Activated CD4-positive, alpha-beta T cell treated with anti-CD3 and anti-CD28 coated beads, Interleukin-2, amount 10 ng/mL, durations not matched to agents 7 days and 5 days (primary cell): ENCODE measurements at regions of chr1 and their contacts with region 1.

Region 1: DNA sequence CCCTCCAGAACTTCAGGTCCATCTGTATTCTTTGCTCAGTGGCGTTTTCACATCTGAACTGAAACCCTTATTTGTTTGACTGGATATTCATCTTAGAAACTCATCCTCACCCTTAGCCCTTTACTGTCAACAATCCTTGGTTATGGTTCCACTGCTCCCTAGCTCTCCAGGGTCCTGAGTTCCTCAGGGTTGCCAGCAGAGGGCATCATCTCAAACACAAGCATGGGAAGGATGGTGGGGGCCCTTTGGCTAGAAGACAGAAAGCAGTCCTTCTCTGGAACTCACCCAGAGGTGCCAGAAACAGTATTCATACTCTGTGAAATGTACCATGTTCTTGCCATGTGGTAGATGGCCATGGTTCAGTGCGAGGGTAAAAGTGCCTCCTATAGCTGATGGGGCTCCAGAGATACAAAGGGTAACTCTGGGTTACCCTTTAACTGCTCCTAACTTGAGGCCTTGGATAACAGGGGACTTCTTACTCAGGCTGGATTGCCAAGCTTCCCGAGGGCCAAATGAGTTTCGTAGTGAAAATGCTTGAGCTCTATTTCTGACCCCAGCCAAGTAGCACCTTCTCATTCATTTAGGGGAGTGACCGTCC is 11.3 kb downstream of the NCSTN start:
- DNase-seq: peak; percentile 27
- H3K4me3 Mint-ChIP-seq: no peak overlapping the region
- H3K27ac Mint-ChIP-seq: no peak overlapping the region
- H3K4me1 Mint-ChIP-seq: peaks cover 4% of the 10 kb centered on the region
- H3K27me3 Mint-ChIP-seq: no peaks in the 10 kb centered on the region

Region 2: DNA sequence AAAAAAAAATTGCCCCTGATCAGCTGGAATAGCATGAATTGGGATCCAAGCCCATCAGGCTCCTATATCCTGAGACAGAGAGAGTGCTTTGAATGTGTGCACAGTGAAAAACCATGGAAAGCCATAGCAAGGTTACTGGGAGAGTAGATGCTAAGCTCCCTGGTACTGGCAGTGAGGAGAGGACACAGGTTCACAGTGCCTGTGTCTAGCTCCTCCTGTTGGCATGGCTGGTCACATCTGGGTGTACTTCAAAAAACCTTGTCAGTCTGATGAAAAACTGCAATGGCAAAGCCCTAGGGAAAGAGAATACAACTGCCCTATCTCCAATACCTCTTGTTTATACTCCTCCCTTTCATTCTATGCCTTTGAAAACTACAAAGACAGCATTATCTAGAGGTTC is 24.4 kb before region 1 on chr1:
- CTCF ChIA-PET with region 1: no interaction called
- POLR2A ChIA-PET with region 1: no interaction called
- DNase-seq: no peak
- H3K4me3 Mint-ChIP-seq: no peak overlapping the region
- H3K27ac Mint-ChIP-seq: no peak overlapping the region
- H3K4me1 Mint-ChIP-seq: no peaks in the 10 kb centered on the region
- H3K27me3 Mint-ChIP-seq: no peaks in the 10 kb centered on the region

Region 3: DNA sequence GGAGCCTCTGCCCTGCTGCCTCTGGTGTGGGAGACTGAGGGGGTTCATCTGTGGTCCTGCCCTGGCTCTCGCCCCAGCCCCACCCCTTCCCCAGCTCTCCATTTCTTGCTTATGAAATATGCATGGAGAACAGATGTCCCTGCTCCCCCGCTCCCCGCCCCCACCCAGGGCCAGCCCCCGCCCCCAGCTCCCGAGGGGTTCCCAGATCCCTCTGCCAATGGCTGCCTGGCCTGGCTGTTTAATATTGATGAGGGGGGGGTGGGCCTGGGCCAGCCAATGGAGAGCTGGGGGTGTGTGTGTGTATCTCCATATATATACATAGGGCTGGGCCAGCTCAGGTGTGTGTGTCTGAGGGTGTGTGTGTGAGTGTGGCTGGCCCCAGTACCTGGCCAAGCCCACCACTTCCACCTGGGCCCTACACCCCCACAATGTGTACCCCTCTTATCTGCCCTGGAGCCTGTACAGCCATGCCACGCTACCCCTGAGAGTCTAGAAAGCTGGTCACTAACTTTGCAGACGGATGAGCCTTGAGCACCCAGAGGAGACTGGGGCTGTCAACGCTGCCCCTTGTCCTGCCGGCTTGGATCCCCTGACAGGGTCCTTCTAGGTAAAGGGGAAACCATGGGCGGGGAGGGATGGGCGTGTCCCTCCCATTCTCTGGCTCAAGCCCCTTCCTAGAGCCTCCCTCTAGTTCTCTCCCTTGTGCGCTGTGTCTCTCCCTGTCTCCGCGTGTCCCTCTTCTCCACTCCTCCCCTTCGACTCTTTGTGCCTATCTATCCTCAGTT is 12.4 kb after region 1 on chr1 and contains the start of gene NHLH1:
- CTCF ChIA-PET with region 1: interaction called, 15 read pairs
- POLR2A ChIA-PET with region 1: no interaction called
- DNase-seq: no peak
- H3K4me3 Mint-ChIP-seq: no peak within 1 kb of the TSS
- H3K27ac Mint-ChIP-seq: peak within 1 kb of the TSS; percentile 38
- H3K4me1 Mint-ChIP-seq: peaks cover 9% of the 10 kb centered on the region
- H3K27me3 Mint-ChIP-seq: peaks cover 3% of the 10 kb centered on the region
- total RNA-seq, gene NHLH1: 0.10 to 0.25 TPM

Region 4: GRCh38 chr1:160376525-160377131 is 22.1 kb after region 1 on chr1:
- CTCF ChIA-PET with region 1: interaction called, 18 read pairs
- POLR2A ChIA-PET with region 1: no interaction called
- DNase-seq: peak; percentile 45
- H3K4me3 Mint-ChIP-seq: no peak overlapping the region
- H3K27ac Mint-ChIP-seq: no peak overlapping the region
- H3K4me1 Mint-ChIP-seq: peaks cover 15% of the 10 kb centered on the region
- H3K27me3 Mint-ChIP-seq: peaks cover 6% of the 10 kb centered on the region

Region 5: GRCh38 chr1:160400223-160400645 is 45.7 kb after region 1 on chr1 and contains the start of gene VANGL2:
- CTCF ChIA-PET with region 1: no interaction called
- POLR2A ChIA-PET with region 1: no interaction called
- DNase-seq: peak; percentile 21
- H3K4me3 Mint-ChIP-seq: no peak within 1 kb of the TSS
- H3K27ac Mint-ChIP-seq: no peak within 1 kb of the TSS
- H3K4me1 Mint-ChIP-seq: peaks cover 2% of the 10 kb centered on the region
- H3K27me3 Mint-ChIP-seq: peaks cover 35% of the 10 kb centered on the region
- total RNA-seq, gene VANGL2: 0.04 TPM in 1 of 2 experiments, not detected in the other

Region 6: GRCh38 chr1:160494620-160495019 is 140.1 kb after region 1 on chr1:
- CTCF ChIA-PET with region 1: no interaction called
- POLR2A ChIA-PET with region 1: no interaction called
- DNase-seq: no peak
- H3K4me3 Mint-ChIP-seq: no peak overlapping the region
- H3K27ac Mint-ChIP-seq: peak overlapping the region; percentile 27
- H3K4me1 Mint-ChIP-seq: peaks cover 1% of the 10 kb centered on the region
- H3K27me3 Mint-ChIP-seq: no peaks in the 10 kb centered on the region